GM10248 (cell line): ENCODE measurements at regions of chr6 and their contacts with region 1.

Region 1: GRCh38 chr6:29737707-29738630 is 14.7 kb downstream of the HLA-F start:
- DNase-seq: peak; percentile 66
- CTCF ChIP-seq: peak; percentile 76

Region 2: DNA sequence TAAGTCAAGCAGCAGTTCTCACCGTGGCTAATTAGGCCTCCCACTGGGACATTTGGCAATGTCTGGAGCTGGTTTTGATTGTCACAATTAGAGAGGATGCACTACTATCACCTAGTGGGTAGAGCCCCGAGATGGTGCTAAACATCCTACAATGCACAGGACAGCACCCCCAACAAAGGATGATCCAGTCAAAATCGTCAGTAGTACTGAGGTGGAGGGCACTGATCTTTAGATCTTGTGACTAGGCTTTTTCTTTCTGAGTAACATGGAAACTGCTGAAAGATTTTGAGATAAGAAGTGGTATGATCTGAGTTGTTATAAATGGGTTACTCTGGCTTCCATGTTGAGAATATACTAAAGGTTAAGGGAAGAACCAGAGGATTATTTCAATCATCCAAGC is 190.4 kb before region 1 on chr6:
- CTCF ChIA-PET with region 1: no interaction called
- POLR2A ChIA-PET with region 1: no interaction called
- DNase-seq: no peak
- CTCF ChIP-seq: no peak

Region 3: GRCh38 chr6:29680416-29680815 is 57.6 kb before region 1 on chr6:
- CTCF ChIA-PET with region 1: no interaction called
- POLR2A ChIA-PET with region 1: no interaction called
- DNase-seq: no peak
- CTCF ChIP-seq: no peak

Region 4: GRCh38 chr6:29720863-29721262 is 17.1 kb before region 1 on chr6:
- CTCF ChIA-PET with region 1: interaction called, 18 read pairs
- POLR2A ChIA-PET with region 1: interaction called, 3 read pairs
- DNase-seq: no peak
- CTCF ChIP-seq: peak; percentile 51

Region 5: GRCh38 chr6:29726571-29727194 is 11.3 kb before region 1 on chr6:
- CTCF ChIA-PET with region 1: interaction called, 20 read pairs
- POLR2A ChIA-PET with region 1: interaction called, 8 read pairs
- DNase-seq: no peak
- CTCF ChIP-seq: no peak

Region 6: DNA sequence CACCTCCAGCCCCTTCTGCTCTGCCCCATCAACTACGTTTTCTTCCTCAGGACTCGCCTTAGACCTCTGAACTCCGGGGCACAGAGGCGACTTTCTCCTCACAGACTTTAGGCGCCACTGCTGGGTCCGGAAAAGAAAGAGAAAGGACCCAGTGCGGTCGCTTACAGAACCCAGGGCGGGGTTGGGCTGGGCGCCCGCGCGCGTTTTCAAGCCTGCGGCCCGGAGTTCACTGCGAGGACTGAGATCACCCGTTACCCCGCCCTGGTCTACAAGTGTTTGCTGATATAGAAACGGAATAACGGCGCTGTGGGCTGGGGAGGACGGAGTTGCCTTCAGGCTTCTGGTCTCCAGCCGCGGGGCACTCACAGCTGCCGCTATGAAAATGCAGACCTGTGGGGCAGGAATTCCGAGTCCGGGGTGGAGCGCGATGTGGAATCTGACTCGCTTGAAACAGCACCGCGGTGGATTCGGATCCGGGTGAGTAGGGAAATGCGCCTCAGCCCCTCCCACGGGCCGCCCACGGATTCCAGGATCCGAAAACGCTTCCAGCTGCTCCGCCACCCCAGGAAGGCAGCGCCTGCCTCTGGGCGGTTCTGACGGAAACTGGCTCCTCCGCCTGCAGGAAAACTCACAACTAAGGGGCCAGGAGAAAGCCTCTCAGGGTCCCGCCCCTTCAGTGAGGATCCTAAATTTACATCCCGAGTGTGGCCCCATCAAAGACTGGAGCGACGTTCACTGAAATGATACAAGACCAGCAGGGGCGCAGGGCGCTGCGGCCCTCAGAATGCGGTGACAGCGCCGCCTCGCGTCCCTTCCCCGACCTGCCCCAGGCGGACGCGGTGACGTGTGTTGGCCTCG is 14.7 kb after region 1 on chr6:
- CTCF ChIA-PET with region 1: interaction called, 65 read pairs
- POLR2A ChIA-PET with region 1: interaction called, 4 read pairs
- DNase-seq: peak; percentile 87
- CTCF ChIP-seq: peak; percentile 97

Region 7: DNA sequence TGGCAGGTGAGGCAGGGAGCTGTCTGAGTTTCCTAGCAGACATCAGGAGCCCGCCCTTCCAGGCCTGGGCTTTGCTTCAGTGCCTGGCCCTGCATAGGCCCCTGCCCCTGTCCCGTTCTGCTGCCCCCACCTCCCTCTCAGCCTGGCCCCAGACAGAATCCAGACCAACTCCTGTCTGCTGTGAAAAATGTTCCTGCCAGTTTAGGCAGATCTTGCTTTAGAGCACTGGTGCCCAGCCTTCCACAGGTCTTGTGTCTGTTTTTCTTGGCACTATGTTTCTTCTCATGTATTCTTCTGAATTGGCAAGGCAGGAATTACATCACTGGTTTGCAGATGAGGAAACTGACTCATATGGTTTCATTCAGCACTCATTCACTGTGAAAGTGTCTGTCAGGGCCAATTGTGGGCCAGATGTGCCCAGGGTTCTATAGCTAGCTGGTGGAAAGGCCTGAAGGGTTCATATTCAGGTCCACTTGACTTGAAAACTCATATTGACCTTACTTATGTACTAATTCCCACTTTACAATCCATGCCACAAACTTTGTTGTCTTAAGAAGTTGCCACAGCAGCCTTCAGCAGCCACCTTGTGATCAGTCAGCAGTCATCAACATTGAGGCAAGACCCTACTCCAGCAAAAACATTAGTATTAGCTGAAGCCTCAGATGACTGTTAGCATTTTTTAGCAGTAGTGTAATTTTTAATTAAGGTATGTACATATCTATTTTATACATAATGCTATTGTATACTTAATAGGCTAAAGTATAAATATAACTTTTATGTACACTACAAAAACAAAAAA is 25.7 kb after region 1 on chr6:
- CTCF ChIA-PET with region 1: interaction called, 14 read pairs
- POLR2A ChIA-PET with region 1: no interaction called
- DNase-seq: peak; percentile 24
- CTCF ChIP-seq: no peak